Right ventricle myocardium inferior (tissue), 1 donor: ENCODE measurements at regions of chr7 and their contacts with region 1.

Region 1: GRCh38 chr7:155644178-155644970 is at the start of gene RBM33:
- DNase-seq: peak; percentile 93
- ATAC-seq: peak; percentile 92
- total RNA-seq, gene RBM33: 36.1 TPM

Region 2: DNA sequence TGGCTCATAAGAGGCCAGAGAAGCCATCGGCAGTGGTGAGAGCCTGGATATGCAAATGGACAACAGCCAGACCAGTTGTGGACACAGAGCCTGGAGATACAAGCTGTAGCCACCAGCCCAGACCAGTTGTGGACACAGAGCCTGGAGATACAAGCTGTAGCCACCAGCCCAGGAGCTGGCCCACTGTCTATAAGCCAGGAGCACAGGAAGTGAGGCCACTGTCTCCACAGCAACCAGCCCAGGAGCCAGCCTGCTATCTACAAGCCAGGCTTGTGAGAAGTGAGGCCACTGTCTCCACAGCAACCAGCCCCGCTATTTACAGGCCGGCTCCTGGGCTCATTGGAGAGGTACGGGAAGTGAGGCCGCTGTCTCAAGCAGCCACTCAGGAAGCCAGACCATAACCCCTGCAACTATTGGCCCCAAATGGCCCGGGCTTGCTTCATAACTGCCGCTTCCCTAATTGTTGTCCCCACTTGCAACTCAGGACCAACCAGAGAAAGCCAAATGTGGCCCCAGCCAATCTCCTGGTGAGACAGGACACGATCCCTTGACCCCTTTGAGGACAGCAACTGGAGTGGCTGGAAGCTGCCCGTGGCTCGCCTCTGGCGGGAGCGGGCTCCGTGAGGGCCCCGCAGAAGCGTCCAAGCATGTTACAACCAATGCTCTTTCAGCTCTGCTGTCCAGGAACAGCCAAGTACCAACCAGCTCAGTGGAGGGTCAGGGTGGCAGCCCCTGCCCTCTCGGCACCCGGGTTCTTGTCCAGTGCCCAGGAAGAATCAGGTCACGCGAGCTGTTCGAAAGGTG is 54.0 kb before region 1 on chr7:
- intact Hi-C with region 1: no loop called
- DNase-seq: peak; percentile 92
- ATAC-seq: peak; percentile 62

Region 3: DNA sequence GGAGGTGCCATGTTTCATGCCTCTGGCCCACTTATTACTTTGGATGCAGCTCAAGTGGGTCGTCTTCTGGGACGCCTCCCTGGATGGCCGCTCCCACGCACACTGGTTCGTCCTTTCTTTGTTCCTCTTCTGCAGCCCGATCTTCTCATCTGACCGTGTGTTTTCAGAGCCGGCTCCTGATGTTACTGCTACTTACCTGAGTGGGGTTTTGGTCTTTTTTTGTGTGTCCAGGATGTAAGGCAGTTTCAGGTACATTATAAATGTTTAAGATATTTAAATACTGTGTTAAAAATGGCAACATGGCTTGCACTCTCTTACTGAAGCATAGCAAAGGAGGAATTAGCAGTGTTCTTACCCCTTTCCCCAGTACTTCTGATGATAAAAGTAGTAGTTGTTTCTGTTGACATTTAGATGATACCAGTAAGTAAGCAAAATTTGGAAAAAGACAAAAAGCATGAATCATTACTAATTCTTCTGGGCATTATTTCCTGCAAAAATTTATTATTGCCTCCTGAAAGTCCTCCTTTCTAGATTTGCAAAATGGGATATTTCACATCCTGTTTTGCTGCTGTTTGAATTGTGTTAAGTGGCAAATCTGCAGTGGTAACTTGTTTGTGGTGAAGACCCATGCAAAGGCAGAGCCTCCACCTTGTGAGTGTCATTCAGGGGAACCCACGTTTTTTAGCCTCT is 108.5 kb after region 1 on chr7:
- intact Hi-C with region 1: loop called (anchors 5 kb)
- DNase-seq: no peak
- ATAC-seq: no peak